Heart left ventricle (tissue), 16 donors: ENCODE measurements at regions of chr19 and their contacts with region 1.

Region 1: GRCh38 chr19:36850559-36851442 is at the start of gene ZNF345:
- DNase-seq: peak; percentile 92 to 95 (median 93)
- ATAC-seq: peak; percentile 96 to 97 (median 96)
- H3K4me3 ChIP-seq: peak within 1 kb of the TSS; percentile 47 to 91 (median 76)
- H3K27ac ChIP-seq: peak within 1 kb of the TSS; percentile 60 to 96 (median 90)
- H3K4me1 ChIP-seq: peaks cover 0 to 31% (median 17%) of the 10 kb centered on the region in 12 donors
- H3K27me3 ChIP-seq: no peaks in the 10 kb centered on the region
- CTCF ChIP-seq: no peak
- POLR2A ChIP-seq: peak in 1 of 2 donors; percentile 47
- total RNA-seq, gene ZNF345: 0.64 to 5.9 (median 4.3) TPM

Region 2: DNA sequence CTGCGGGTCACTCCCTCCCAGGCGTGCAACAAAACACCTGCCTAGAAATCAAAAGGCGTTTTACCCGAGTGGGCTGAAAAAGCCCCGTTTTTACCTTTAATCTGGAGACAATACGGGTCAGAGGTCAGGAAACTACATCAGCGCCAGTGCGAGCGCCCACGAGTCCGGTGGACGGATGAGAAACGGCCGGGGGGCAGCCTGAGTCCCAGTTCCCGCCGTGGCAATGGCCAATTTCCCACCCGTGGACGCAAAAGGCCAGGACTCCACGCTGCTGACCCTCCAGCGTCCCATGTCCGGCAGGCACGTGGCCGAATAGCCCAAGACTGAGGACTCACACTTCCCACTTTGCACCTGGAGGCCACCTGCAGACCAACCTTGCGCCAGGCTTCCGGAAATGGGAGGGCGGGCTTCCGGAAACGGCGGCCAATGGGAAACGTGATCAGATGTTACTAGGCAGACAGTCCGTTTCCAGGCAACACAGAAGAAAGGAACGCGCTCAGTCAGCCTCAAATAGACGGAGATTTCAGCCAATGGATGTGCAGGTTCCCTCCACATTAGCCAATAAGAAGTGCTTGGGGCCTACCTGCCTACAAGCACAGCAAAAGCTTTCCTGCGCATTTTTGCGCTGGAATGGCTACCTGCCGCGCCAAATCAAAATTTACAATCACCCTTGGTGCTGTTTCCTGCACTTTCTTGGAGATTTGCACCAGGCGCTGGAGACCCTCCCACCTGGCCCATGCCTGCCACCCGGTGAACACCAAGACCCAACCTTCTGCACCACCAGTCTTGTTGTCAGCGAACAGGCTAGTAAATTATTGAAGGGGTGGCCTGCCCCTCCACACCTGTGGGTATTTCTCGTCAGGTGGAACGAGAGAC is 519.2 kb before region 1 on chr19:
- intact Hi-C with region 1: loop called in 1 of 10 experiments (anchors 5 kb)
- DNase-seq: peak; percentile 87 to 91 (median 88)
- ATAC-seq: peak; percentile 97 to 100 (median 99)
- H3K4me3 ChIP-seq: peak overlapping the region; percentile 65 to 95 (median 76)
- H3K27ac ChIP-seq: peak overlapping the region in 7 of 12 donors; percentile 15 to 65 (median 58)
- H3K4me1 ChIP-seq: peaks cover 0 to 15% (median 12%) of the 10 kb centered on the region in 12 donors
- H3K27me3 ChIP-seq: no peaks in the 10 kb centered on the region
- CTCF ChIP-seq: peak in 2 of 12 donors; percentile 9 to 11
- POLR2A ChIP-seq: peak in 1 of 2 donors; percentile 40

Region 3: DNA sequence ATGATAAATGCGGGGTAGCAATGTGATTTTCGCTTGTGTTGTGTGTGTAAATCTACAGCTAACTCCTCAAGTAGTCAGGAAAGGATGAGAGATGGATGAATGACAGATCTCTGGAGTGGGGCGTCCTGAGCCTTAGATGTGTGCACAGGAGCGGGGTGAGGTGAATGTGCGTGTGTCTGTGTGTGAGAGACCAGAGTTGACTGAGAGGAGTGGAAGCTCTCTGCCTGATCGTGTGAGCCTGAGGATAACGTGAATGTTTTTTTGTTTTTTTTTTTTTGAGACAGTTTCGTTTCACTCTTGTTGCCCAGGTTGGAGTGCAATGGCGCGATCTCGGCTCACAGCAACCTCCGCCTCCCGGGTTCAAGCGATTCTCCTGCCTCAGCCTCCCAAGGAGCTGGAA is 185.0 kb before region 1 on chr19:
- intact Hi-C with region 1: loop called in 1 of 10 experiments (anchors 10 kb)
- DNase-seq: no peak
- ATAC-seq: no peak
- H3K4me3 ChIP-seq: peak overlapping the region; percentile 47 to 96 (median 78)
- H3K27ac ChIP-seq: peak overlapping the region in 1 of 12 donors; percentile 83
- H3K4me1 ChIP-seq: peaks cover 3 to 21% (median 16%) of the 10 kb centered on the region in 12 donors
- H3K27me3 ChIP-seq: no peaks in the 10 kb centered on the region
- CTCF ChIP-seq: no peak
- POLR2A ChIP-seq: no peak

Region 4: DNA sequence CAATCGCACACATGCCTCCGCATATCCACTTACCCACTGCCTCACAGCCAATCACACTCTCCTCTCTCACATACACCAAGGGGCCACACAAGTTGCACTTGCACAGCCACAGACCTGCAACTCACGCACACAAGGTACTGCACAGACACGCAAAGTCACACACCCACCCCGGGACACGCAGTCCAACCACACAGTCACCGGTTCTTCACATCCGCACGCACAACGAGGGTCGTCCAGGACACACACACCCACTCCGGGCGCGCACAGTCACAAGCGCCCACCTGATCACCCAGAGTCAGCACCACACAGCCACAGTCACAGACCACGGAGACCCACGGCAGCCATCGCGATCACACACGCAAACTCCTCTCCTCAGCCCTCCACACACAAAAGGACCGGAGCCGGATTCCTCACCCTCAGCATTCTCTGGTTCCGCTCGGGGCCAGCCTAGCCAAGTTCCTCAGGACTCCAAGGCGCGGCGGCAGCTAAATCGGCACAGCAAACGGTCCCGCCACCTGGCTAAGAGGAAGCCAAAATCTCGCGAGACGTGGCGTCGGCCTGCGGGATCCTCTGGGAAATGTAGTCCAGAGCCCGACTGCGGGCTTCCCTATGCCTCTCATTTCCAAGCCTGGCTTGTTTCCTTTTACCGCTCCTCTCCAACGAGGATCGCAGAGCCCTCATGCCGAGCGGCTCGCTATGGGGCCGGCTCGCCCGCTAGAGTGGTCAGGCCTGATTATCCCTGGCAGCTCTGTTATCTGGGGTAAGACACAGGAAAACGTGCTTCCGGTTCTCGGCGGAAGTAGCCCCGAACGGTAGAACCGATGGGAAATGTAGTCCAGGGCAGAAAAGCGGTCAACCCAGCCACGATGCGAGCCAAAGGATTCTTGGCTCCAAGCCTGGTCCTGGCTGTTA is 78.2 kb before region 1 on chr19 and contains the start of gene ZNF850:
- intact Hi-C with region 1: loop called in 3 of 10 experiments (anchors 1 to 5 kb)
- DNase-seq: peak; percentile 95 to 97 (median 96)
- ATAC-seq: peak; percentile 95 to 98 (median 97)
- H3K4me3 ChIP-seq: peak within 1 kb of the TSS; percentile 44 to 93 (median 76)
- H3K27ac ChIP-seq: peak within 1 kb of the TSS; percentile 34 to 92 (median 85)
- H3K4me1 ChIP-seq: peaks cover 0 to 23% (median 10%) of the 10 kb centered on the region in 12 donors
- H3K27me3 ChIP-seq: no peaks in the 10 kb centered on the region
- CTCF ChIP-seq: no peak
- POLR2A ChIP-seq: peak in 1 of 2 donors; percentile 34
- total RNA-seq, gene ZNF850: 2.3 to 7.3 (median 4.0) TPM

Region 5: DNA sequence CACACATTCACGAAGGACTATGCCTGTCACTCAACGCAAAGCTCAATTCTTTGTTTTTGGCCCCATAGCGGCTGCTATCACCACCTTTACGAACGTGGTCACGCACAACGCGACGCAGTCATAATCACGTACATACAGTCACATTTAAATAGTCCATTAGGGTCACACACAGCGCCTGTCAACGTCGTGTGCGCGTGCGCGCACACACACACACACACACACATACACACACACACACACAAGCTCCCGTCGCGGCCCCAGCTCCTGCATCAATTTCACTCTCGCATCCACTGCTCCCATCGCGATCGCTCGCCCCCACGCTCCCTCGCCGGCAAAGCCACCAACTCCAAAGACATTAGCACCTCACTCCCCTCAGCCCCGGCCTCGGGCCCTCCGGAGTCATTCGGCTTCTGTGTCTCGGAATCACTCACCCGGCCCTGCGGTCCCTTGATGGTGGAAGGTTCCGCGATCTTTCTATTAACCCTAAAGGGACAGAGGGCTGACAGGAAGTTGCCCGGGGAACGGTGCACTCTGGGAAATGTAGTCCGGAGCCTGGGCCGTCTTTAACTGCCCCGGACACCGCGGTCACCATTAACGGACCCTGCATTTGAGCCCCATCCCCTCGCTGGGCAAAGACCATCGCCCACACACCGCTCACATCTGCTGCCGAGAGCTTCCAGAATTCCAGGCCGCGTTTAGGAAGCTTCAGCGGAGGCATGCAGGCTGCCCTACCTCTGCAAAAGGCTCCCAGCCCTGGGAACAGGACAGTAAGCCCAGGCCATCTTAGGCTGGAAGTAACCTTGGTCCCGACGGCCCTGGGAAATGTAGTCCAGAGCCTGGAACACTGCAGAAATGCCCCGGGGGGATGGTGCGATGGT is 12.7 kb before region 1 on chr19 and contains the start of gene ZNF790:
- intact Hi-C with region 1: loop called in 4 of 10 experiments (anchors 1 kb)
- DNase-seq: peak; percentile 91 to 92 (median 91)
- ATAC-seq: peak; percentile 98 to 99 (median 99)
- H3K4me3 ChIP-seq: peak within 1 kb of the TSS; percentile 27 to 92 (median 73)
- H3K27ac ChIP-seq: peak within 1 kb of the TSS; percentile 69 to 98 (median 92)
- H3K4me1 ChIP-seq: peaks cover 0 to 32% (median 15%) of the 10 kb centered on the region in 12 donors
- H3K27me3 ChIP-seq: no peaks in the 10 kb centered on the region
- CTCF ChIP-seq: no peak
- POLR2A ChIP-seq: peak in 1 of 2 donors; percentile 21
- total RNA-seq, gene ZNF790: 3.4 to 13.0 (median 8.5) TPM

Region 6: DNA sequence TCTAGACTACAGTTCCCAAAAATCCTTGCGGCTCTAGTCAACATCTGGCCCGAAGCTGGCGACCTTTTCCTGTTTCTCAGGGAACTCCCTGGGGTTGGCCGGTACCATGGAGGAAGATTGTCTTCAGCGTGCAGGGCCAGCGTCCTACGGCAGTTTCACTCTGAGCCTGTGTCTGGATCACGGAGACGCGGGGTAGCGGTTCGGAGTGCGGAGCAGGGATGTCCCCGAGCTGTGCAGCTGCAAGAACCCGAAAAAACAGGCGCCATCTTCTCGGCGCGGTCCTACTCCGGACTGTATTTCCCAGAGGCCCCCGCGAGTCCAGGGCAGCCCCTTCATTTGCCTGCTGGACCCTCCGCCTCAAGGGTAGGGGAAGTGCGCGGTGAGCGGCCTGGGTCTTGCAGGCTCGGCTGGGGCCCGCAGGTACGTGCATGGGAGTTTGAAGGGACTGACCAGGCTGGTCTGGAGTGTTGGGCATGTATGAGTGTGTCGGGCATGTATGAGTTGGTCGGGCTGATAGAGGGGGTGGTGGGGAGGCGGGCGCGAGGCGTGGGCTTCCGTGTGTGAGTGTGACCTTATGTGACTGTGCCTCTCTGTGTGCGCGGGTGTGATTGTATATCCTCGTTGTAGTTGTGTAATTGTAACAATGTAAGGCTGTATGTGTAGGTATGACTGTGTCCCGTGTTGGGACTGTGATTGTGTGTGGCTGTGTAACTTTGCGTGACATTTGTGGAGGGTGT is 367.2 kb after region 1 on chr19 and contains the start of gene ZNF383:
- intact Hi-C with region 1: loop called in 1 of 10 experiments (anchors 10 kb)
- DNase-seq: peak; percentile 87 to 94 (median 91)
- ATAC-seq: peak; percentile 98
- H3K4me3 ChIP-seq: peak within 1 kb of the TSS; percentile 65 to 89 (median 78)
- H3K27ac ChIP-seq: peak within 1 kb of the TSS; percentile 89 to 98 (median 94)
- H3K4me1 ChIP-seq: peaks cover 0 to 26% (median 9%) of the 10 kb centered on the region in 12 donors
- H3K27me3 ChIP-seq: no peaks in the 10 kb centered on the region
- CTCF ChIP-seq: no peak
- POLR2A ChIP-seq: peak in 1 of 2 donors; percentile 28
- total RNA-seq, gene ZNF383: 4.8 to 13.8 (median 9.2) TPM